ENCODE measurements at regions of chr16 and their contacts with region 1.

Region 1: DNA sequence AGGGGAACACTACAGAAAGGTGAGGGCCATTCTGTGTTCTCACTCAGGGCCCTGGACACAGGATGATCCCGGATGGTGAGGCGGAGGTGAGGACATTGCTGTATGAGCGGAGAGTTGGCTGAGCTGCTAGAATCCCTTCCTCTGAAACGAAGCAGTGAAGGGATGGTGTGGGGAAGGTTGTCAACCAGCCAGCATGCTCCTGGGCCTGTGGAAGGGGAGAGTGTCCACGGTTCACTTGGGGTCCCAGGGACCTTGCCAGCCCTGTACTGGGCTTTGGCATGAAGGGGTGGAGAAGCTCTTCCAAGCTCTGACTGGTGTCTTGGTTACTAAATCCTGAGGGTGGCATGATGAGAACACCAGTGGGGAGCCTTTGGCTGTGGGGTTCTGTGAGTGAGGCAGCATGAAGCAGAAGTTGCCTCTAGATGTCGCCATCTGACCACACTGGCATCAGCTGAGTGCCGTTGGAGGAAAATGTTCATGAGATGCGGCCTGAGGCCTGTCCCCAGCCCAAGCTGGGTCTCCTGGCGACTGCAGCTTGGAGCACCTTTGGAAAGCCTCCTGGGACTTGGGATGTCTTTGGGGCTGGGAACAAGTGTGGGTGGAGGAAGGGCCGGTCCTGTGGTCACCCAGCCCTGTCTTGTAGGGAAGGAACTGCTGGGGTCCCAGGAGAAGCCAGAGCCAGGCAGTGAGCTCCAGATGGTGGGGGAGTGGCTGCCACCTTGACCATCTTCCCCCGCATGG is 14.8 kb downstream of the PDP2 start:
- DNase-seq: no peak
- ATAC-seq: peak; percentile 98
- H3K4me3 ChIP-seq: no peak overlapping the region
- H3K27ac ChIP-seq: no peak overlapping the region
- H3K4me1 ChIP-seq: no peaks in the 10 kb centered on the region; the same call in 1 of the 2 replicates
- H3K27me3 ChIP-seq: no peaks in the 10 kb centered on the region
- CTCF ChIP-seq: peak; percentile 86 to 95 (median 91); a peak in 5 of 6 replicates
- EP300 ChIP-seq: no peak
- POLR2A ChIP-seq: no peak
- RAD21 ChIP-seq: peak; percentile 89

Region 2: DNA sequence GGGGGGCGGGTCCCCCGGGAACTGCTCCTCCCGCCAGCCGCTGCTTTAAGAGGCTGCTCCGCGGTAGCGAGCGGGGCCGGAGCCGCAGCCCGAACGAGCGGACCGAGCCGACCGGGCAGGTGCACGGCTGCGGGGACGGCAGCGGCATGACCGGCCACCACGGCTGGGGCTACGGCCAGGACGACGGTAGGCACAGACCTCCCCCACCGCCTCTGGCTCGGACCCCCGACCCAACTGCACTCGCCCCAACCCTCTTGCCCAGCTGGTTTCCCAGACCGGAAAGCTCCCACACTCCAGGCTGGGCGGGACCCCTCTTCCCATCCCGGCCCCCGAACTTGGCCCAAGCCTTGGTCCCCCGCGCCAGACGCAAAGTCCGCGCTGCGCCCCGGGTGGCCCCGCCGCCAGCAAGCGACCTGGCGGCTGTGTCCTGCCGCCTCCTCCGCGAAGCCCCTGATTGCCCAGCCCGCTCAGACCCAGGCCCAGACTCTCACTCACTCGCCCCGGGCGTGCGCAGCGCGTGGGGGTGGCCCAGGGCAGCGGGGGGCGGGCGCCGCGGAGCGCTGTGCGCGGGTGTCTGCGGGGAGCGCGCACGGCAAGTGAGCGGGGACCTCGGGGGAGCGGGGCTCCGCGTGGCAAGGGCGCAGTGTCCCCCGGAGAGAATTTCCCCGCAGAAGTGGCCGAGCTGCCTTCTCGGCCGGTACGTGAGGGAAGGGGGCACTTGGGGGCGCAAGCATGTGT is 50.6 kb before region 1 on chr16 and contains the start of gene CA7:
- CTCF ChIA-PET with region 1: no interaction called
- POLR2A ChIA-PET with region 1: no interaction called
- RAD21 ChIA-PET with region 1: no interaction called
- SMC1A ChIA-PET with region 1: no interaction called
- in situ Hi-C with region 1: no loop called
- intact Hi-C with region 1: no loop called
- DNase-seq: no peak
- ATAC-seq: no peak; the same call in 2 of the 3 replicates
- H3K4me3 ChIP-seq: no peak within 1 kb of the TSS
- H3K27ac ChIP-seq: no peak within 1 kb of the TSS
- H3K4me1 ChIP-seq: no peaks in the 10 kb centered on the region
- H3K27me3 ChIP-seq: peaks cover 4 to 10% of the 10 kb centered on the region in 2 experiments; a peak in 3 of 4 replicates
- CTCF ChIP-seq: no peak
- EP300 ChIP-seq: no peak
- POLR2A ChIP-seq: no peak
- RAD21 ChIP-seq: no peak
- polyA plus RNA-seq, gene CA7: 0.04 TPM in 1 of 2 experiments, not detected in the other

Region 3: GRCh38 chr16:66880288-66881013 is 14.7 kb before region 1 on chr16 and contains the start of gene PDP2:
- CTCF ChIA-PET with region 1: interaction called, 34 read pairs
- POLR2A ChIA-PET with region 1: interaction called, 6 read pairs
- RAD21 ChIA-PET with region 1: interaction called, 5 read pairs
- SMC1A ChIA-PET with region 1: interaction called, 6 read pairs
- in situ Hi-C with region 1: no loop called
- intact Hi-C with region 1: no loop called
- DNase-seq: peak; percentile 80
- ATAC-seq: peak; percentile 98
- H3K4me3 ChIP-seq: peak within 1 kb of the TSS; percentile 74
- H3K27ac ChIP-seq: peak within 1 kb of the TSS; percentile 63
- H3K4me1 ChIP-seq: peaks cover 16% of the 10 kb centered on the region
- H3K27me3 ChIP-seq: no peaks in the 10 kb centered on the region
- CTCF ChIP-seq: no peak
- EP300 ChIP-seq: 0 out of 4 replicates have a peak, but pooled peaks of 1 of the 2 experiments have one; percentile 8
- POLR2A ChIP-seq: peak; percentile 88
- RAD21 ChIP-seq: no peak
- polyA plus RNA-seq, gene PDP2: 3.0 to 4.5 TPM

Region 4: DNA sequence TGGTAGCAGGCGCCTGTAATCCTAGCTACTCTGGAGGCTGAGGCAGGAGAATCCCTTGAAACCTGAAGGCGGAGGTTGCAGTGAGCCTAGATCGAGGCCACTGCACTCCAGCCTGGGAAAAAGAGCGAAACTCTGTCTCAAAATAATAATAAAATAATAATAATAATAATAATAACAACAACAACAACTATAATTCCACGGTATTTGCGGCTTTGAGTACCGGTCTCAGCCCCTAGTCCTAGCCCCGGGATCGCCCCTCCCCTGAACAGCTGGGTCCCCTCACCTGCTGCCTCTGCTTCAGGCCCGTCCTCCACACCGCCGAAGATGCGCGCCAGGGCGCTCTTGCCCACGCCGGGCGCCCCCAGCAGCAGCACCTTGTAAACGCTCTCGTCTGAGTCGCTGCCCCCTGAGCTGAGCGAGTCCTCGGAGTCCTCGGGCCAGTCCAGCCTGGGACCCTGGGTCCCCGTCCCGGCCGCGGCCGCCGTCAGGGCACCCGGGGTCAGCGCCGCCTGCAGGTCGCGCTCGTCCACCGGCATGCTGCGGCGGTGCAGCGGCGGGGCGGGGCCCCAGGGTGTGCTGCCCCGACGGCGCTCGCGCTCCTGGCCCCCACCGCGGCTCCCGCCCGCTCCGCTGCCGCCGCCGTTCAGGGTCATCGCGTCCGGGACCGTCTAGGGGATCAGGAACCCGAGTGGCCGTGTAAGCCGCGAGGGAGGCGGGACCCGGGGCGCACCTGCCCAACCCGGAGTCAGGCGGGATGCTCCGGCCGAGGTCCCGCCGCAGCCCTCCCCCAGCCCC is 29.6 kb after region 1 on chr16:
- CTCF ChIA-PET with region 1: interaction called, 77 read pairs
- POLR2A ChIA-PET with region 1: no interaction called
- RAD21 ChIA-PET with region 1: interaction called, 6 read pairs
- SMC1A ChIA-PET with region 1: interaction called, 9 read pairs
- in situ Hi-C with region 1: no loop called
- intact Hi-C with region 1: loop called (anchors 1 kb)
- DNase-seq: no peak
- ATAC-seq: peak; percentile 72
- H3K4me3 ChIP-seq: peak overlapping the region; percentile 53
- H3K27ac ChIP-seq: no peak overlapping the region
- H3K4me1 ChIP-seq: peaks cover 29% of the 10 kb centered on the region
- H3K27me3 ChIP-seq: no peaks in the 10 kb centered on the region; a peak in 3 of 4 replicates
- CTCF ChIP-seq: peak; percentile 33 to 45 (median 34); a peak in 5 of 6 replicates
- EP300 ChIP-seq: no peak
- POLR2A ChIP-seq: no peak
- RAD21 ChIP-seq: no peak

Region 5: GRCh38 chr16:66934153-66934838 is 39.2 kb after region 1 on chr16 and contains the start of gene CIAO2B:
- CTCF ChIA-PET with region 1: interaction called, 77 read pairs
- POLR2A ChIA-PET with region 1: no interaction called
- RAD21 ChIA-PET with region 1: interaction called, 6 read pairs
- SMC1A ChIA-PET with region 1: interaction called, 7 read pairs
- in situ Hi-C with region 1: no loop called
- intact Hi-C with region 1: no loop called
- DNase-seq: peak; percentile 47
- ATAC-seq: peak; percentile 88
- H3K4me3 ChIP-seq: peak within 1 kb of the TSS; percentile 78
- H3K27ac ChIP-seq: peak within 1 kb of the TSS; percentile 94
- H3K4me1 ChIP-seq: peaks cover 7% of the 10 kb centered on the region
- H3K27me3 ChIP-seq: no peaks in the 10 kb centered on the region
- CTCF ChIP-seq: no peak
- EP300 ChIP-seq: no peak
- POLR2A ChIP-seq: peak; percentile 98
- RAD21 ChIP-seq: no peak
- polyA plus RNA-seq, gene CIAO2B: 101 to 120 TPM

Region 6: GRCh38 chr16:66947302-66948065 is 52.4 kb after region 1 on chr16:
- CTCF ChIA-PET with region 1: interaction called, 6 read pairs
- POLR2A ChIA-PET with region 1: interaction called, 3 read pairs
- RAD21 ChIA-PET with region 1: no interaction called
- SMC1A ChIA-PET with region 1: interaction called, 3 read pairs
- in situ Hi-C with region 1: no loop called
- intact Hi-C with region 1: loop called (anchors 1 kb)
- DNase-seq: peak; percentile 72
- ATAC-seq: peak; percentile 87
- H3K4me3 ChIP-seq: peak overlapping the region; percentile 57; the same call in 1 of the 2 replicates
- H3K27ac ChIP-seq: no peak overlapping the region
- H3K4me1 ChIP-seq: peaks cover 19% of the 10 kb centered on the region
- H3K27me3 ChIP-seq: no peaks in the 10 kb centered on the region
- CTCF ChIP-seq: peak; percentile 74 to 94 (median 88); a peak in 5 of 6 replicates
- EP300 ChIP-seq: no peak
- POLR2A ChIP-seq: no peak
- RAD21 ChIP-seq: peak; percentile 81

Region 7: GRCh38 chr16:67040906-67041305 is 145.8 kb after region 1 on chr16:
- CTCF ChIA-PET with region 1: no interaction called
- POLR2A ChIA-PET with region 1: no interaction called
- RAD21 ChIA-PET with region 1: no interaction called
- SMC1A ChIA-PET with region 1: no interaction called
- in situ Hi-C with region 1: no loop called
- intact Hi-C with region 1: no loop called
- DNase-seq: no peak
- ATAC-seq: no peak; the same call in 2 of the 3 replicates
- H3K4me3 ChIP-seq: no peak overlapping the region
- H3K27ac ChIP-seq: peak overlapping the region; percentile 26; the same call in 1 of the 2 replicates
- H3K4me1 ChIP-seq: peaks cover 21% of the 10 kb centered on the region
- H3K27me3 ChIP-seq: no peaks in the 10 kb centered on the region
- CTCF ChIP-seq: no peak
- EP300 ChIP-seq: no peak
- POLR2A ChIP-seq: no peak
- RAD21 ChIP-seq: no peak

Region 8: DNA sequence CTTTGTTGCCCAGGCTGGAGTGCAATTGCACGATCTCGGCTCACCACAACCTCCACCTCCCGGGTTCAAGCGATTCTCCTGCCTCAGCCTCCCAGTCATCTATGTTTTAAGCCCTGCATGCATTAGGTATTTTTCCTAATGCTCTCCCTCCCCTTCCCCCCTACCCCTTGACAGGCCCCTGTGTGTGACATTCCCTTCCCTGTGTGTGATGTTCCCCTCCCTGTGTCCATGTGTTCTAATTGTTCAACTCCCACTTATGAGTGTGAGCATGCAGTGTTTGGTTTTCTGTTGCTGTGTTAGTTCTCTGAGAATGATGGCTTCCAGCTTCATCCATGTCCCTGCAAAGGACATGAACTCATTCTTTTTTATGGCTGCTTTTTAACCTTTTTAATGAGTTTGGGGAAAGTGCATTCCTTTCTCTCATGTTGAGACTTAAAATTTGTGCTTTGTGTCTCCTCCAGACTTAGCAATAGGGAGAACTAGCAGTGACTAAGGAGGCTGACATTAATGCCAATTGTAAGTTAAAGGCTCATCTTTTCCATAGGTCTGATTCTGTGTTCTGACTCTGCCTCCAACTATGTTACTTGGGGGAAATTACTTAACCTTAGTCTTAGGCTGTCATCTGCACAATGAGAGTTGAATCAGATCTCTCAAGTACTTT is 196.9 kb after region 1 on chr16:
- CTCF ChIA-PET with region 1: no interaction called
- POLR2A ChIA-PET with region 1: no interaction called
- RAD21 ChIA-PET with region 1: no interaction called
- SMC1A ChIA-PET with region 1: no interaction called
- in situ Hi-C with region 1: no loop called
- intact Hi-C with region 1: no loop called
- DNase-seq: no peak
- ATAC-seq: no peak
- H3K4me3 ChIP-seq: no peak overlapping the region
- H3K27ac ChIP-seq: no peak overlapping the region
- H3K4me1 ChIP-seq: peaks cover 12% of the 10 kb centered on the region; the same call in 1 of the 2 replicates
- H3K27me3 ChIP-seq: no peaks in the 10 kb centered on the region
- CTCF ChIP-seq: no peak
- EP300 ChIP-seq: no peak
- POLR2A ChIP-seq: no peak
- RAD21 ChIP-seq: no peak